ENCODE measurements at regions of chr5 and their contacts with region 1.

Region 1: GRCh38 chr5:157108976-157109375 is at the start of gene HAVCR2:
- DNase-seq: peak; percentile 20 to 73 (median 57)
- ATAC-seq: peak; percentile 90
- H3K4me3 ChIP-seq: peak within 1 kb of the TSS; percentile 27
- H3K4me3 Mint-ChIP-seq: peak within 1 kb of the TSS; percentile 81 to 97 (median 85)
- H3K27ac ChIP-seq: peak within 1 kb of the TSS; percentile 55
- H3K27ac Mint-ChIP-seq: peak within 1 kb of the TSS; percentile 82 to 96 (median 92)
- H3K4me1 ChIP-seq: peaks cover 19 to 22% of the 10 kb centered on the region in 2 donors
- H3K4me1 Mint-ChIP-seq: peaks cover 16 to 68% (median 47%) of the 10 kb centered on the region in 7 donors
- H3K27me3 ChIP-seq: no peaks in the 10 kb centered on the region
- H3K27me3 Mint-ChIP-seq: no peaks in the 10 kb centered on the region
- total RNA-seq, gene HAVCR2: 5.1 to 110 (median 5.5) TPM

Region 2: DNA sequence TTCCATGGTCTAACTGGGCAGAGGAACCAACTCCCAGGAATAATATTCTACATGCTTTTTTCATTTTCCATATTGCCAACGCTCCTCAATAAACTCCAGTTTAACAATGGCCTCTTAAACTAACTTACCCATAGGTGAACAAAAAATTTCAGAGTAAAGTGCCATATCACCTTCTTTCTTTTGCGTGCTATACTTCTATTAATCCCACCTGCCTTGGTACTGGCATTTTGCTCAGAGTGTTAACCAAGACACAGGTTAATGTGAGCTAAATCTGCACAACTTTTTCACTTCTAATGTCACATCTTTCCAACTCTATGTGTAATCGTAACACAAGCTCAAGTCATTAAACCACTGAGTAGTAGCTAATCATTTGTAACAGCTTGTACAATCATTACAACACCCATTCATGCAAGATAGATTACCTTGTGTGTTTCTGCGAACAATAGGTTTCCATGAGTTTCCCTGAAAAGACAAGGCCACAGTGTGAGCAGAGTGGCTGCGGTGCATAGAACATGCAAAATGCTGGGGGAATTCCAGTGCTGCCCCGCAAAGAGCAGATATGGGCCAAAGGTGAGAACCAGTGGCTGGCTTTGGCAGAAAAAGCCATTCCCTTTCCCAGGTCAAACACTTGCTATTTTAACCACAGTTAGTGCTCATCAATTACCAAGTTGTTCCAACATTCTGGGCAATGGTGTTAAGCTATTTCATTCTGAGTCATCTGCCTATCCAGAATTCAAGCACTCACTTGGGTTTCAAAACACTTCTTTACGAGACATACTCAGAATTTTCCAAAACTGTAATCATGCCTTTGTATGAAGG is 188.7 kb before region 1 on chr5:
- CTCF ChIA-PET with region 1: no interaction called
- POLR2A ChIA-PET with region 1: no interaction called
- intact Hi-C with region 1: loop called in 1 of 2 experiments (anchors 2 kb)
- DNase-seq: peak in 1 of 9 donors; percentile 76
- ATAC-seq: peak; percentile 46
- H3K4me3 ChIP-seq: no peak overlapping the region
- H3K4me3 Mint-ChIP-seq: peak overlapping the region in 1 of 10 donors; percentile 79
- H3K27ac ChIP-seq: no peak overlapping the region
- H3K27ac Mint-ChIP-seq: peak overlapping the region in 7 of 9 donors; percentile 18 to 94 (median 52)
- H3K4me1 ChIP-seq: peaks cover 9 to 10% of the 10 kb centered on the region in 2 donors
- H3K4me1 Mint-ChIP-seq: peaks cover 12 to 78% (median 67%) of the 10 kb centered on the region in 7 donors
- H3K27me3 ChIP-seq: no peaks in the 10 kb centered on the region
- H3K27me3 Mint-ChIP-seq: no peaks in the 10 kb centered on the region

Region 3: GRCh38 chr5:157076558-157076957 is 32.4 kb before region 1 on chr5:
- CTCF ChIA-PET with region 1: no interaction called
- POLR2A ChIA-PET with region 1: no interaction called
- intact Hi-C with region 1: loop called in 1 of 2 experiments (anchors 5 kb)
- DNase-seq: no peak
- ATAC-seq: no peak
- H3K4me3 ChIP-seq: no peak overlapping the region
- H3K4me3 Mint-ChIP-seq: peak overlapping the region in 1 of 10 donors; percentile 23
- H3K27ac ChIP-seq: no peak overlapping the region
- H3K27ac Mint-ChIP-seq: peak overlapping the region in 1 of 9 donors; percentile 54
- H3K4me1 ChIP-seq: no peaks in the 10 kb centered on the region
- H3K4me1 Mint-ChIP-seq: peaks cover 0 to 48% (median 0%) of the 10 kb centered on the region in 7 donors
- H3K27me3 ChIP-seq: no peaks in the 10 kb centered on the region
- H3K27me3 Mint-ChIP-seq: no peaks in the 10 kb centered on the region

Measured in naive thymus-derived CD4-positive, alpha-beta T cell (primary cell).